ENCODE measurements at regions of chr16 and their contacts with region 1.

Region 1: GRCh38 chr16:86709902-86710596 is 131.7 kb downstream of the FOXL1 start:
- DNase-seq: no peak
- H3K4me3 ChIP-seq: no peak overlapping the region
- H3K27ac ChIP-seq: no peak overlapping the region
- H3K4me1 ChIP-seq: no peaks in the 10 kb centered on the region
- H3K27me3 ChIP-seq: no peaks in the 10 kb centered on the region
- CTCF ChIP-seq: no peak
- EP300 ChIP-seq: no peak
- POLR2A ChIP-seq: no peak

Region 2: GRCh38 chr16:86727632-86728031 is 17.6 kb after region 1 on chr16:
- intact Hi-C with region 1: loop called in 1 of 4 experiments (anchors 2 kb)
- DNase-seq: no peak
- H3K4me3 ChIP-seq: no peak overlapping the region
- H3K27ac ChIP-seq: no peak overlapping the region
- H3K4me1 ChIP-seq: no peaks in the 10 kb centered on the region
- H3K27me3 ChIP-seq: no peaks in the 10 kb centered on the region
- CTCF ChIP-seq: no peak
- EP300 ChIP-seq: no peak
- POLR2A ChIP-seq: no peak

Region 3: DNA sequence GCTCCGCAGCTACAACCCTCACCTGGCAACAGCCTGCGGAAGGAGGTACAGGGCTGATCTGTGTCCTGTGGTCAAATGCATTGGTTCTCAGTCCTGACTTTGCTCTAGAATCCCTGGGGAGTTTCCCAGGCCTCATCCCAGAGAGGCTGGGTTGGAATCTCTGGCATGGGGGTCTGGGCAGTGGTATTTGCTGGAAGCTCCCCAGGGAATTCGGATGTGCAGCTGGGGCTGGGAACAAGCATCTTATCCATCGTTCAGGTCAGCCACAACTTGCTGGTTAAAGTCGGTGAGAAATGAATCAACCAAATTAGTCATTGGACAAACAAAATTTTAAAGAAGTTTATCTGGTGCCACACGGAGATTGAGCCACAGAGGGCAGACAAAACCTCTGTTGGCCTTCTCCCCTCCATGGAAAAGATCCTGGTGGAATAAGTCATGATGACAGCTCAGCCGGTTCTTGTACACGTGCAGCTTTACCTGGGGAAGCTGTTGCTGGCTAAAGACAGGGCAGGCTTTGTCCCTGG is 99.5 kb after region 1 on chr16:
- intact Hi-C with region 1: no loop called
- DNase-seq: no peak
- H3K4me3 ChIP-seq: no peak overlapping the region
- H3K27ac ChIP-seq: no peak overlapping the region
- H3K4me1 ChIP-seq: no peaks in the 10 kb centered on the region
- H3K27me3 ChIP-seq: no peaks in the 10 kb centered on the region
- CTCF ChIP-seq: no peak
- EP300 ChIP-seq: no peak
- POLR2A ChIP-seq: no peak